Breast epithelium (tissue), 4 donors: ENCODE measurements at regions of chr1 and their contacts with region 1.

Region 1: DNA sequence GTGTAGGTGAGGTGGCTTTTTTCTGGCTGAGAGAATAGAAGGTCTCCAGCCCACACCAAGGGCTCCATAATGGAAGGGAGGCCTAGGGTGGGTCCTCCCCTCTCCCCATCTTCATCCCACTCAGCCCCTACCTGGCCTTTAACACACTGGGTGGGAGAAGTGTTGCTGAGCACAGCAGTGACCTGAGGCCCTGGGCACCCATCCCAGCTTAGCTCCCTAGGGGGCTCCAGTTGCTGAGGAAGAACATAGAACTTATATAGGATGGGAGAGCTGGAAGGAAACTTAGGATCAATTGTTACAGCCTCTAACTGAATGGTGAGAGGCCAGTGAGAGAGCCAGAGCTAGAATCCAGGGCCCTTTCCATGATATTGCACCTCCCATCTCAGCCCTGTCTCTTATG is 76.9 kb downstream of the SYT2 start:
- DNase-seq: no peak
- H3K4me3 ChIP-seq: no peak overlapping the region
- H3K27ac ChIP-seq: no peak overlapping the region
- H3K4me1 ChIP-seq: no peaks in the 10 kb centered on the region
- H3K27me3 ChIP-seq: peaks cover 0 to 7% of the 10 kb centered on the region in 2 donors
- CTCF ChIP-seq: no peak
- POLR2A ChIP-seq: no peak

Region 2: DNA sequence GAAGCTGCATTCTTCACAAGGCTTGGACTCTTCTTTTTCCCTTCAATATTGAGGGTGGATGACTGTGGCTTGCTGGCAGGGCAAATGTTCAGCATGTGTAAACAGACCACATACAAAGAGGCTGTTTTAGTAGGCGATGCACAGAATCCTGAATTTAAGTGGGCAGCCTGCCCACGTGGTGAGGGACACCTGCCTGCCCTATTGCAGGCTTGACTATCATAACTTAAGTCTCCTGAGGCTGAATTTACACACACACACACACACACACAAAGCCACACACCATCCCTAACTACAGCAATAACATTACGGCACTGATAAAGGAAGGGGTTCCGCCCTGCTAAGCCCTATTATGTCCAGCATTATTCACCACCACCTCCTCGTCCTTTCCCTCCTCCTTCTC is 60.9 kb after region 1 on chr1:
- intact Hi-C with region 1: loop called (anchors 2 kb)
- DNase-seq: no peak
- H3K4me3 ChIP-seq: no peak overlapping the region
- H3K27ac ChIP-seq: no peak overlapping the region
- H3K4me1 ChIP-seq: no peaks in the 10 kb centered on the region
- H3K27me3 ChIP-seq: peaks cover 0 to 20% of the 10 kb centered on the region in 2 donors
- CTCF ChIP-seq: no peak
- POLR2A ChIP-seq: no peak

Region 3: GRCh38 chr1:202938287-202938925 is 305.0 kb after region 1 on chr1:
- intact Hi-C with region 1: no loop called
- DNase-seq: no peak
- H3K4me3 ChIP-seq: no peak overlapping the region
- H3K27ac ChIP-seq: no peak overlapping the region
- H3K4me1 ChIP-seq: no peaks in the 10 kb centered on the region
- H3K27me3 ChIP-seq: no peaks in the 10 kb centered on the region
- CTCF ChIP-seq: no peak
- POLR2A ChIP-seq: no peak